ENCODE measurements at regions of chr10 and their contacts with region 1.

Region 1: GRCh38 chr10:91632671-91633550 is at the start of gene PPP1R3C:
- DNase-seq: peak; percentile 73
- CTCF ChIP-seq: peak; percentile 3

Region 2: GRCh38 chr10:91381257-91381891 is 251.5 kb before region 1 on chr10:
- CTCF ChIA-PET with region 1: interaction called, 12 read pairs
- POLR2A ChIA-PET with region 1: no interaction called
- DNase-seq: no peak
- CTCF ChIP-seq: no peak

Region 3: GRCh38 chr10:91389636-91390512 is 243.0 kb before region 1 on chr10:
- CTCF ChIA-PET with region 1: interaction called, 15 read pairs
- POLR2A ChIA-PET with region 1: no interaction called
- DNase-seq: peak; percentile 33
- CTCF ChIP-seq: peak; percentile 52

Region 4: GRCh38 chr10:91493313-91493712 is 139.6 kb before region 1 on chr10:
- CTCF ChIA-PET with region 1: interaction called, 30 read pairs
- POLR2A ChIA-PET with region 1: no interaction called
- DNase-seq: peak; percentile 7
- CTCF ChIP-seq: no peak

Region 5: GRCh38 chr10:91520661-91521060 is 112.2 kb before region 1 on chr10:
- CTCF ChIA-PET with region 1: no interaction called
- POLR2A ChIA-PET with region 1: no interaction called
- DNase-seq: no peak
- CTCF ChIP-seq: no peak

Region 6: GRCh38 chr10:91613411-91614253 is 19.3 kb before region 1 on chr10:
- CTCF ChIA-PET with region 1: interaction called, 10 read pairs
- POLR2A ChIA-PET with region 1: no interaction called
- DNase-seq: no peak
- CTCF ChIP-seq: no peak

Region 7: DNA sequence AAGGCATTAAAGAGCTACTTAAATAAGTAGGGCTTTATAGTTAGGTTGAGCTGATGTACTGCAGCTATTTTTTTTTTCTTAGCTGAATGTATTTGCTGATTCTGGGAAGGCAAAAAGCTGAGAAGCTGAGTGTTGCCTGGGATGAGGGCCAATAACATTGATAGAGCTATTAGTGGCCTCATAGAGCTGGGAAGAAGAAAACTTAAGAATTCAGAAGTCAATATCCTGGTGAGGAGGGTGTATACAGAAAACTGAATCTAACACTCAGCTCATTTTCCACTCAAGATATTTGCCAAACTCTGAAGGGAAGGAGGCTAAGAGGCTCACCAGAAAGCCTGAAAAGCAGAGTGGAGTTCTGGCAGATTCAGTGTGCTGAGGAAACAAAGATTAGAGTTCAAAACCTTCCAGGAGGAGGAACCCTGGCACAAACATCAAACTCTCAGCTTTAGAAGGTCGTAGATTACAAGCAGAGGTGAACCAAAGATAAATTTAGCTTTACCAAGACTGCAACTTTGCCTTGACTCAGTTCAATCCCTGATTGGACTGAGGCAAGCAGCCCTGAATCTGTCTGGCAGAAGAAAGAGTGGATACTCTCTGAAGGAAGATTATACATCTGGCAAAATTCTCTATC is 11.3 kb before region 1 on chr10:
- CTCF ChIA-PET with region 1: interaction called, 31 read pairs
- POLR2A ChIA-PET with region 1: no interaction called
- DNase-seq: no peak
- CTCF ChIP-seq: no peak

Region 8: DNA sequence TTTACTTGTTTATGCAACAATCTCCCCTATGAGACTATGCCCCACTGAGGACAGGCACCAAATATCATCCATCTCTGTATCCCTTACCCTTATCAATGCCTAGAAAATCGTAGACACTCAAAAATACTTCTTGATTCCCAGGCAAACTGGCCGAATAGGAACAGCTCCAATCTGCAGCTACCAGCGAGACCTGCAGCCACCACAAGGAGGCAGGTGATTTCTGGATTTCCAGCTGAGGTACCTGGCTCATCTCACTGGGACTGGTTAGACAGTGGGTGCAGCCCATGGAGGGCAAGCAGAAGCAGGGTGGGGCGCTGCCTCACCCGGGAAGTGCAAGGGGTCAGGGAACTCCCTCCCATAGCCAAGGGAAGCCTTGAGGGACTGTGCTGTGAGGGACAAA is 10.8 kb after region 1 on chr10:
- CTCF ChIA-PET with region 1: interaction called, 12 read pairs
- POLR2A ChIA-PET with region 1: no interaction called
- DNase-seq: no peak
- CTCF ChIP-seq: no peak

Measured in GM10248 (cell line).